ENCODE measurements at regions of chr3 and their contacts with region 1.

Region 1: GRCh38 chr3:152268555-152269425 is at the start of gene MBNL1:
- DNase-seq: no peak
- ATAC-seq: peak; percentile 67
- H3K4me3 ChIP-seq: peak within 1 kb of the TSS; percentile 95
- H3K27ac ChIP-seq: peak within 1 kb of the TSS; percentile 90
- H3K4me1 ChIP-seq: peaks cover 10% of the 10 kb centered on the region
- H3K27me3 ChIP-seq: no peaks in the 10 kb centered on the region
- CTCF ChIP-seq: no peak
- EP300 ChIP-seq: no peak
- POLR2A ChIP-seq: peak; percentile 96
- RAD21 ChIP-seq: no peak
- polyA plus RNA-seq, gene MBNL1: 59.6 to 73.3 TPM

Region 2: GRCh38 chr3:152127058-152127457 is 141.7 kb before region 1 on chr3:
- CTCF ChIA-PET with region 1: no interaction called
- POLR2A ChIA-PET with region 1: interaction called, 3 read pairs
- RAD21 ChIA-PET with region 1: no interaction called
- SMC1A ChIA-PET with region 1: no interaction called
- in situ Hi-C with region 1: no loop called
- intact Hi-C with region 1: loop called (anchors 5 kb)
- DNase-seq: peak; percentile 85
- ATAC-seq: peak; percentile 98
- H3K4me3 ChIP-seq: no peak overlapping the region
- H3K27ac ChIP-seq: no peak overlapping the region
- H3K4me1 ChIP-seq: peaks cover 16% of the 10 kb centered on the region
- H3K27me3 ChIP-seq: no peaks in the 10 kb centered on the region
- CTCF ChIP-seq: no peak
- EP300 ChIP-seq: peak; percentile 77 to 83; a peak in 3 of 4 replicates
- POLR2A ChIP-seq: no peak
- RAD21 ChIP-seq: peak; percentile 12; the same call in 1 of the 2 replicates

Region 3: GRCh38 chr3:152199102-152199840 is 69.5 kb before region 1 on chr3:
- CTCF ChIA-PET with region 1: interaction called, 9 read pairs
- POLR2A ChIA-PET with region 1: interaction called, 14 read pairs
- RAD21 ChIA-PET with region 1: interaction called, 26 read pairs
- SMC1A ChIA-PET with region 1: interaction called, 23 read pairs
- in situ Hi-C with region 1: no loop called
- intact Hi-C with region 1: loop called (anchors 2 kb)
- DNase-seq: no peak
- ATAC-seq: peak; percentile 14
- H3K4me3 ChIP-seq: peak overlapping the region; percentile 26
- H3K27ac ChIP-seq: peak overlapping the region; percentile 85
- H3K4me1 ChIP-seq: peaks cover 31% of the 10 kb centered on the region
- H3K27me3 ChIP-seq: no peaks in the 10 kb centered on the region
- CTCF ChIP-seq: peak in 1 of 3 experiments; percentile 4; a peak in 1 of 6 replicates
- EP300 ChIP-seq: peak in 1 of 2 experiments; percentile 32; a peak in 1 of 4 replicates
- POLR2A ChIP-seq: no peak
- RAD21 ChIP-seq: no peak

Region 4: GRCh38 chr3:152241142-152242017 is 27.4 kb before region 1 on chr3:
- CTCF ChIA-PET with region 1: interaction called, 3 read pairs
- POLR2A ChIA-PET with region 1: interaction called, 4 read pairs
- RAD21 ChIA-PET with region 1: interaction called, 30 read pairs
- SMC1A ChIA-PET with region 1: interaction called, 46 read pairs
- in situ Hi-C with region 1: no loop called
- intact Hi-C with region 1: loop called (anchors 2 kb)
- DNase-seq: no peak
- ATAC-seq: peak; percentile 69
- H3K4me3 ChIP-seq: no peak overlapping the region
- H3K27ac ChIP-seq: peak overlapping the region; percentile 91
- H3K4me1 ChIP-seq: peaks cover 27% of the 10 kb centered on the region
- H3K27me3 ChIP-seq: no peaks in the 10 kb centered on the region
- CTCF ChIP-seq: no peak
- EP300 ChIP-seq: no peak
- POLR2A ChIP-seq: no peak
- RAD21 ChIP-seq: no peak

Region 5: DNA sequence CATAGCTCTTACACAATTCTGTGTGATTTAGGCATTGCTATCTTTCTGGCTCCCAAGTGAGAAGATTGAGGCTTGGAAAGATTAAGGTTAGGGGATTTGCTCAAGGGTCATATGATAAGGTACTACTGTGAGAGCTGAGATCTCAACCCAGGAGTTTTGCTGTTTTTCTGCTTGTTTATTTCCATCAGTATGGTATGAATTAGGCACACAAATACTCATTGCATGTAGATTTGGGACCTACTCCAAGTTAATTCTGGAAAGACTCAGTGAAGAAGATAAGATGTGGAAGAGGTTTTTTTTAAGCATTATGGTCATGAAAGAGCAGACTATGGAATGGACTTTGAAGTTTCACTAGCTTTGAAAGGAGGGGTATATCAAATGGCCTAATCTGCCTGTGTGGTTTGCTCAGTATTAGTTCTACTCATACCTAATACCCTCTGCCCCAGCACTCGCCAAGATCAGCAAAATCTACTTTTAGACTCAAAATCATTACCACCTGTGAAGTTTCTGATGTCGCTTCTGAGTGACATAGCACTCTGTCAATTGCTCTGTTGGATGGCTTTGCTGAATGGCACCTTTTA is 12.4 kb after region 1 on chr3:
- CTCF ChIA-PET with region 1: interaction called, 9 read pairs
- POLR2A ChIA-PET with region 1: interaction called, 10 read pairs
- RAD21 ChIA-PET with region 1: interaction called, 53 read pairs
- SMC1A ChIA-PET with region 1: interaction called, 47 read pairs
- in situ Hi-C with region 1: no loop called
- intact Hi-C with region 1: no loop called
- DNase-seq: no peak
- ATAC-seq: peak; percentile 68
- H3K4me3 ChIP-seq: peak overlapping the region; percentile 33; the same call in 1 of the 2 replicates
- H3K27ac ChIP-seq: peak overlapping the region; percentile 64
- H3K4me1 ChIP-seq: peaks cover 43% of the 10 kb centered on the region
- H3K27me3 ChIP-seq: no peaks in the 10 kb centered on the region
- CTCF ChIP-seq: no peak
- EP300 ChIP-seq: no peak
- POLR2A ChIP-seq: no peak
- RAD21 ChIP-seq: no peak

Region 6: GRCh38 chr3:152328841-152329240 is 60.1 kb after region 1 on chr3:
- CTCF ChIA-PET with region 1: interaction called, 9 read pairs
- POLR2A ChIA-PET with region 1: interaction called, 3 read pairs
- RAD21 ChIA-PET with region 1: interaction called, 11 read pairs
- SMC1A ChIA-PET with region 1: interaction called, 14 read pairs
- in situ Hi-C with region 1: no loop called
- intact Hi-C with region 1: no loop called
- DNase-seq: no peak
- ATAC-seq: no peak
- H3K4me3 ChIP-seq: no peak overlapping the region
- H3K27ac ChIP-seq: no peak overlapping the region; the same call in 1 of the 2 replicates
- H3K4me1 ChIP-seq: peaks cover 24% of the 10 kb centered on the region
- H3K27me3 ChIP-seq: no peaks in the 10 kb centered on the region
- CTCF ChIP-seq: no peak
- EP300 ChIP-seq: no peak
- POLR2A ChIP-seq: no peak
- RAD21 ChIP-seq: no peak

Measured in GM12878 (cell line).